ENCODE measurements at regions of chr3 and their contacts with region 1.

Region 1: GRCh38 chr3:55946574-55947160 is 459.6 kb upstream of the WNT5A start:
- DNase-seq: no peak
- H3K4me3 ChIP-seq: no peak overlapping the region
- H3K27ac ChIP-seq: no peak overlapping the region
- H3K4me1 ChIP-seq: no peaks in the 10 kb centered on the region
- H3K27me3 ChIP-seq: peaks cover 2% of the 10 kb centered on the region
- CTCF ChIP-seq: no peak

Region 2: GRCh38 chr3:55534876-55535275 is 411.8 kb before region 1 on chr3:
- CTCF ChIA-PET with region 1: no interaction called
- dilution Hi-C with region 1: no loop called
- in situ Hi-C with region 1: no loop called
- intact Hi-C with region 1: no loop called
- DNase-seq: peak; percentile 75
- H3K4me3 ChIP-seq: no peak overlapping the region
- H3K27ac ChIP-seq: no peak overlapping the region
- H3K4me1 ChIP-seq: no peaks in the 10 kb centered on the region
- H3K27me3 ChIP-seq: no peaks in the 10 kb centered on the region
- CTCF ChIP-seq: no peak

Region 3: DNA sequence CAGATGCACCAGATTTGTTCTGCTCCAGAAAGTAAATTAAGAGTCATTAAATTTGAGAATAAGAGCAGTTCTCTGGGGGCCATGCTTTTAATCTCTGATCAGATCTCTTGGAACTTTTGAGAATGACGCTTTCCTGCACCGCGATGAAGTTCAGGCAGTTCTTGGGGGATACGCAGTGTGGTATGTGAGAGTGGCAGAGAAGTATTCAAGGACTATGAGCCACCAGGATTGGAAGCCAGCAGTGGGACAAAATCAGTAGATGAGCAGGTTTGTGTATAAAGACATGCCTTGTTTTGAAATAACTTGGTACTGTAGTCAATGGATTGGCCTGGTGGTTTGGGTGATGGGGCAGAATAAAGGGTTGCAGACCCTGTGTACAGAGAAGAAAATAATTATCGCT is 38.0 kb after region 1 on chr3:
- CTCF ChIA-PET with region 1: interaction called, 26 read pairs
- dilution Hi-C with region 1: no loop called
- in situ Hi-C with region 1: no loop called
- intact Hi-C with region 1: no loop called
- DNase-seq: no peak
- H3K4me3 ChIP-seq: no peak overlapping the region
- H3K27ac ChIP-seq: no peak overlapping the region
- H3K4me1 ChIP-seq: no peaks in the 10 kb centered on the region
- H3K27me3 ChIP-seq: peaks cover 2% of the 10 kb centered on the region
- CTCF ChIP-seq: no peak